Posterior vena cava (tissue), 2 donors: ENCODE measurements at regions of chr5 and their contacts with region 1.

Region 1: GRCh38 chr5:4044881-4045280 is 449.2 kb downstream of the IRX1 start:
- DNase-seq: no peak

Region 2: GRCh38 chr5:3905031-3905430 is 139.8 kb before region 1 on chr5:
- intact Hi-C with region 1: loop called in 1 of 2 experiments (anchors 5 kb)
- DNase-seq: no peak

Region 3: GRCh38 chr5:3933536-3933935 is 111.3 kb before region 1 on chr5:
- intact Hi-C with region 1: no loop called
- DNase-seq: no peak